ENCODE measurements at regions of chr2 and their contacts with region 1.

Region 1: DNA sequence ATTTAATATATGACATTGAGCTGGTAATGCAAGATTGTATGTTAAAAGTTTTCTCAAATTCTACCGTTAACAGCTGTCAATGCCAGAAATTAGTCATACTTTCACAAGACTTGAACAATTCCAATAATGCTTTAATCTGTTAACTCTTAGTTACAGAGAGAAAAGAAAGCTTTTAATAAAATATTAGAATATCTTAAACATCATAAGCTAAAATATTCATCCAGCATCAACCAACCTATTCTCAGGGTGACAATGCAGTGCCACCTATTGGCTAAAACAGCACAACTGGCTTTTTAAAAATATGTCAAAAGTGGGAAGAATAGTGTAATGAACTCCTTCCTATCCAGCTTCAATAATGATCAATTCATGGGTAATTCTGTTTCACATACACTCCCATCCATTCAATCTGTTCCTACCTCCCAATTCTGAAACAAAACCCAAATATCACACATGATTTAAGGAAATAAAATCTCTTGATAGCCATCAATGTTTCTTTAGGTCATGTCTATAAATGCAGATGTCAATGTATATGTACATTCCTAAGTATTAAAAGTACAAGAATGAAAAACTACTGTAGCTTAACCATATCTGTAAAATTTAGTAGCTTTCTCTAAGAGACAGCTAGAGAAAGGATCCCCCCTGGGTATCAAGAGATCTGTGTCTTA is 79.8 kb upstream of the CCDC141 start:
- DNase-seq: peak in 4 of 14 experiments; percentile 30 to 50 (median 36)
- ATAC-seq: peak; percentile 41
- H3K4me3 ChIP-seq: no peak overlapping the region
- H3K4me3 Mint-ChIP-seq: no peak overlapping the region
- H3K27ac ChIP-seq: no peak overlapping the region
- H3K27ac Mint-ChIP-seq: no peak overlapping the region
- H3K4me1 ChIP-seq: no peaks in the 10 kb centered on the region
- H3K4me1 Mint-ChIP-seq: no peaks in the 10 kb centered on the region
- H3K27me3 ChIP-seq: no peaks in the 10 kb centered on the region
- H3K27me3 Mint-ChIP-seq: no peaks in the 10 kb centered on the region
- CTCF ChIP-seq: peak; percentile 74

Region 2: GRCh38 chr2:178796079-178796677 is 333.5 kb before region 1 on chr2:
- CTCF ChIA-PET with region 1: no interaction called
- POLR2A ChIA-PET with region 1: no interaction called
- intact Hi-C with region 1: loop called (anchors 1 to 2 kb)
- DNase-seq: peak in 3 of 14 experiments; percentile 30 to 43 (median 34)
- ATAC-seq: no peak
- H3K4me3 ChIP-seq: no peak overlapping the region
- H3K4me3 Mint-ChIP-seq: no peak overlapping the region
- H3K27ac ChIP-seq: no peak overlapping the region
- H3K27ac Mint-ChIP-seq: no peak overlapping the region
- H3K4me1 ChIP-seq: no peaks in the 10 kb centered on the region
- H3K4me1 Mint-ChIP-seq: no peaks in the 10 kb centered on the region
- H3K27me3 ChIP-seq: no peaks in the 10 kb centered on the region
- H3K27me3 Mint-ChIP-seq: no peaks in the 10 kb centered on the region
- CTCF ChIP-seq: peak; percentile 76

Region 3: GRCh38 chr2:178891265-178891958 is 238.3 kb before region 1 on chr2:
- CTCF ChIA-PET with region 1: interaction called, 18 read pairs
- POLR2A ChIA-PET with region 1: interaction called, 6 read pairs
- intact Hi-C with region 1: loop called (anchors 1 kb)
- DNase-seq: peak; percentile 1 to 76 (median 46)
- ATAC-seq: peak; percentile 71
- H3K4me3 ChIP-seq: no peak overlapping the region
- H3K4me3 Mint-ChIP-seq: no peak overlapping the region
- H3K27ac ChIP-seq: no peak overlapping the region
- H3K27ac Mint-ChIP-seq: no peak overlapping the region
- H3K4me1 ChIP-seq: no peaks in the 10 kb centered on the region
- H3K4me1 Mint-ChIP-seq: peaks cover 5% of the 10 kb centered on the region
- H3K27me3 ChIP-seq: no peaks in the 10 kb centered on the region
- H3K27me3 Mint-ChIP-seq: no peaks in the 10 kb centered on the region
- CTCF ChIP-seq: peak; percentile 93

Region 4: DNA sequence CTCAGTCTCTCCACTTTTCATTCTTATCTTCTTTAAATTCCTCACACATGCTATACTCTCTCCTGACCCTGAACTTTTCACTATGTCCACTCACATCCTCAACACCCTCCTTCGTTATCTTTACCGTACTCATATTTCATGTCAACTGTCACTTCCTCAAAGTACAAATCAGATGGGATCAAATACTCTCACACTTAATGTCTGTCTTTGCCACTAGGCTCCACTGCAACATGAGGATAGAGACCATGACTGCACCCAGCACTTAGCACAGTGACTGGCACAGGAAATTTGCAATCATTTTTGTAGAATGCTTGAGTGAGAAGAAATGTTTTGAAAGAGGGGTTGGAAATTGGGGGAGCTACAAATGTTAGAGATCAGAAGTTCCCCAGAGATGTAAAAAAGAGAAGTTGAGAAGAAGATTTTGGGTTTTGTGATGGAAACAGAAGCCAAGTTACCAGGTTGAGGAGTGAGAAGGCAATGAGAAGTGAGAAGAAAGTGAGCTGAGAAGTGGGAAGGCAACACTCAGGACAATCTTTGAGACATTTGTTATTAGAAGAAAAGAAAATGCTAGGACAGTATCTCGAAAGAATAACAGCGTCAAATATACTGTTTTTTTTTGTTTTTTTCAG is 166.8 kb before region 1 on chr2:
- CTCF ChIA-PET with region 1: no interaction called
- POLR2A ChIA-PET with region 1: no interaction called
- intact Hi-C with region 1: loop called (anchors 2 to 5 kb)
- DNase-seq: peak in 1 of 14 experiments; percentile 9
- ATAC-seq: no peak
- H3K4me3 ChIP-seq: no peak overlapping the region
- H3K4me3 Mint-ChIP-seq: no peak overlapping the region
- H3K27ac ChIP-seq: no peak overlapping the region
- H3K27ac Mint-ChIP-seq: no peak overlapping the region
- H3K4me1 ChIP-seq: no peaks in the 10 kb centered on the region
- H3K4me1 Mint-ChIP-seq: no peaks in the 10 kb centered on the region
- H3K27me3 ChIP-seq: no peaks in the 10 kb centered on the region
- H3K27me3 Mint-ChIP-seq: no peaks in the 10 kb centered on the region
- CTCF ChIP-seq: no peak

Region 5: GRCh38 chr2:178976351-178976750 is 153.4 kb before region 1 on chr2:
- CTCF ChIA-PET with region 1: no interaction called
- POLR2A ChIA-PET with region 1: no interaction called
- intact Hi-C with region 1: loop called in 1 of 2 experiments (anchors 1 kb)
- DNase-seq: no peak
- ATAC-seq: no peak
- H3K4me3 ChIP-seq: no peak overlapping the region
- H3K4me3 Mint-ChIP-seq: no peak overlapping the region
- H3K27ac ChIP-seq: no peak overlapping the region
- H3K27ac Mint-ChIP-seq: no peak overlapping the region
- H3K4me1 ChIP-seq: no peaks in the 10 kb centered on the region
- H3K4me1 Mint-ChIP-seq: no peaks in the 10 kb centered on the region
- H3K27me3 ChIP-seq: no peaks in the 10 kb centered on the region
- H3K27me3 Mint-ChIP-seq: no peaks in the 10 kb centered on the region
- CTCF ChIP-seq: no peak